ENCODE measurements at regions of chr10 and their contacts with region 1.

Region 1: DNA sequence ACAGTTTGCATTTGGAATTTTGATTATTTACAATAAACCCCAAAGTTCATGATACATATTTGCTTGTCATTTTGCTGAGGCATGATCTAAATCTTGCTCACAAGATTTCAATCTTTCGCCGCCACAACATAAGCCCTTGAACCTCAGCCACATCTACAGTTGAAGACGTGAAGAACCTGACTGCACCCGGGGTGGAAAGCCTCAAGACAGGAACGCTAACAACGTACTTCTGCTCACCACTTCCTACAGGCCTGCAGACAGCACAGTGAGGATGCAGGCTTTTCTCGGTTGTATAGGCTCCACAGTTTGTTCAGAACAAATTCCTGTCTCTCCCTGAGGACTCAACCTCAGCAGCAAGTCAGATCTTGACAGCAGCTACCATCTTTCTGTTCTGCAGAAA is 393.8 kb upstream of the PRKCQ start:
- DNase-seq: peak in 6 of 9 experiments; percentile 16 to 67 (median 49)
- ATAC-seq: peak; percentile 92
- H3K4me3 ChIP-seq: no peak overlapping the region
- H3K4me3 Mint-ChIP-seq: no peak overlapping the region
- H3K27ac ChIP-seq: peak overlapping the region in 1 of 2 experiments; percentile 38
- H3K27ac Mint-ChIP-seq: no peak overlapping the region
- H3K4me1 ChIP-seq: no peaks in the 10 kb centered on the region
- H3K4me1 Mint-ChIP-seq: peaks cover 13% of the 10 kb centered on the region
- H3K27me3 ChIP-seq: no peaks in the 10 kb centered on the region
- H3K27me3 Mint-ChIP-seq: no peaks in the 10 kb centered on the region
- CTCF ChIP-seq: no peak

Region 2: DNA sequence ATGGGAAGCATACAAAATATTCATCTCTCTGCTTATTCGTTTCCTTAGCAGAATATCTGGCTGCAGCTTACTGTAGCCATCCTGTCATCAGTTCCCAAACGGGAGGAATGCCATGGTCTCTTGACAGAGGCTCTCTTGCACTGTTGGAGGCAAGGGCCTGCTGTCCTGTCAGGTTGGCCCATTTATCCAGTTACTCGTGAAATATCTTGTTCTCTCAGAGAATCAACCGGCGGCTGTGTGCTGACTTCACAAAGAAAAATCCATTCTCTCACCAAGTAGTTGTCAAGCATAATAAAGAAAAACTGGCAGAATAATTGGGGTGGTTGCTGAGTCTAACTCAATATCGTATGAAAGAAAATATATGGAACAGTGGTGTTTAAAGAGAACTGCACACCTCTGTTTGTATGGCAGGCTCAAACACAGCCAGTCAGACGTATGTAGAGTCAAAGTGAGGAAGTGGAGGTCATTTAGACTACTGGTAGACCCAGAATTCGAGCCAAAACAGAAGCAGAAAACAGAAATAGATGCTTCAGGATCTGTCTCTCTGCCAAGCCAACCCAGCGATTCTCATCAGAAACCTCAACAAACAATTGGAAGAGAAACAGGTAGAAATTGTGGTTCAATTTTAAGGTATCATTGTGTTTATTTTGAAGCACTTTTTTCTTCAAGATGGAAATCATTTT is 44.6 kb before region 1 on chr10:
- CTCF ChIA-PET with region 1: no interaction called
- POLR2A ChIA-PET with region 1: no interaction called
- intact Hi-C with region 1: loop called (anchors 5 kb)
- DNase-seq: peak in 2 of 9 experiments; percentile 35 to 53
- ATAC-seq: no peak
- H3K4me3 ChIP-seq: no peak overlapping the region
- H3K4me3 Mint-ChIP-seq: no peak overlapping the region
- H3K27ac ChIP-seq: peak overlapping the region in 1 of 2 experiments; percentile 82
- H3K27ac Mint-ChIP-seq: peak overlapping the region; percentile 28
- H3K4me1 ChIP-seq: peaks cover 35% of the 10 kb centered on the region
- H3K4me1 Mint-ChIP-seq: peaks cover 44% of the 10 kb centered on the region
- H3K27me3 ChIP-seq: no peaks in the 10 kb centered on the region
- H3K27me3 Mint-ChIP-seq: peaks cover 10% of the 10 kb centered on the region
- CTCF ChIP-seq: no peak

Region 3: GRCh38 chr10:7007600-7008190 is 33.8 kb after region 1 on chr10:
- CTCF ChIA-PET with region 1: no interaction called
- POLR2A ChIA-PET with region 1: no interaction called
- intact Hi-C with region 1: no loop called
- DNase-seq: no peak
- ATAC-seq: no peak
- H3K4me3 ChIP-seq: no peak overlapping the region
- H3K4me3 Mint-ChIP-seq: no peak overlapping the region
- H3K27ac ChIP-seq: no peak overlapping the region
- H3K27ac Mint-ChIP-seq: no peak overlapping the region
- H3K4me1 ChIP-seq: no peaks in the 10 kb centered on the region
- H3K4me1 Mint-ChIP-seq: peaks cover 2% of the 10 kb centered on the region
- H3K27me3 ChIP-seq: no peaks in the 10 kb centered on the region
- H3K27me3 Mint-ChIP-seq: no peaks in the 10 kb centered on the region
- CTCF ChIP-seq: no peak

Measured in CD8-positive, alpha-beta T cell (primary cell).